ENCODE measurements at regions of chr17 and their contacts with region 1.

Region 1: DNA sequence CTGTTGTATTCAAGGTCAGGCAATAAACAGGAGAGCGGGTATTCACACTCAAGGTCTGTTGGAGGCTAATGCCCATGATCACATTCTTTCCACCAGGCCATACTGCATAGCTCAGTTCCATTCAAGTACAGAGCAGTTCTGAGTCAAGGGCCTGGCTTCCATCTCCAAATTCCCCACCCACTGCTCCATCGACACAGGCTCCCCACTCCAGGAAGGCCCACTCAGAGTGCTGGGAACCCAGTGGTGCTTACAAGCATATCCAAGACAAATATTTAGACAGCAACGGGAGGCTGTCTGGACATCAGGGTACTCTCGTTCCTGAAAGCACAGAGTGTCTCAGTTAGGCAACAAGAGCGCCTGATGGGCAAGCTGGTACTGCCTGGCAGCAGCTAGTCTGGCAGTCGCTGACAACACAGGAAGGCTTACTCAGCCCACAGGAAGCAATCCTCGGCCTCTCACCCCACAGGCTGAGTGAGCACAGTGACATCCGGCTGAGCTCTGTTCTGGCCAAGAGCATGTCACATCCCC is 40.9 kb downstream of the RFFL start:
- DNase-seq: peak; percentile 88
- ATAC-seq: peak; percentile 100
- H3K4me3 Mint-ChIP-seq: peak overlapping the region; percentile 74
- H3K27ac Mint-ChIP-seq: peak overlapping the region; percentile 99
- H3K4me1 Mint-ChIP-seq: peaks cover 48% of the 10 kb centered on the region
- H3K27me3 Mint-ChIP-seq: no peaks in the 10 kb centered on the region
- CTCF ChIP-seq: no peak

Region 2: GRCh38 chr17:35011671-35012210 is 10.9 kb before region 1 on chr17:
- CTCF ChIA-PET with region 1: interaction called, 11 read pairs
- POLR2A ChIA-PET with region 1: interaction called, 15 read pairs
- intact Hi-C with region 1: no loop called
- DNase-seq: no peak
- ATAC-seq: no peak
- H3K4me3 Mint-ChIP-seq: no peak overlapping the region
- H3K27ac Mint-ChIP-seq: peak overlapping the region; percentile 4
- H3K4me1 Mint-ChIP-seq: no peaks in the 10 kb centered on the region
- H3K27me3 Mint-ChIP-seq: no peaks in the 10 kb centered on the region
- CTCF ChIP-seq: no peak

Region 3: DNA sequence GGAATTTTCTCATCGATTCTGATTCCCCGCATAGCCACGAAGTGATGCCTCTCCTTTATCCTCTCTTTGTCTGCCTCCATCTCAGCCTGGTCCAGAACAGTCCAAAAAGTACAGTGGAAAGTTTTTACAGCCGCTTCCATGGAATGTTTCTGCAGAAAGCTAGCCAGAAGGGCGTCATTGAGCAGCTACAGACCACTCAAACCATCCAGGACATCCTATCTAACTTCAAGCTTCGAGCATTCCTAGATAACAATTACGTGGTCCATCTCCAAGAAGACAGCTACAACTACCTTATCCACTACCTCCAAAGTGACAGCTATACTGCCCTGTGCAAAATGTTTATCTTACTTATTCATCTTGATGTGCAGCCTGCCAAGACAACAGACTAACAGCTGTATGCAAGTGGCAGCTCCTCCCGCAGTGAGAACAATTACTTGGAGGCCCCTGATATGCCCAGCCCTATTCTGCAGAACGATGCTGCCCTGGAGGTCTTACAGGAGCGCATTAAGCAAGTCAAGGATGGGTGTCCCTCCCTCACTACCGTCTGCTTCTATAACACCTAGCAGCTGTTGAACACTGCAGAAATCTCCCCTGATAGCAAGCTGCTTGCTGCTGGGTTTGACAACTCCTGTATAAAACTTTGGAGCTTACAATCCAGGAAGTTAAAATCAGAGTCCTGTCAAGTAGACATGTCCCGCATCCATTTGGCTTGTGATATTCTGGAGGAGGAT is 476.0 kb after region 1 on chr17:
- CTCF ChIA-PET with region 1: no interaction called
- POLR2A ChIA-PET with region 1: no interaction called
- intact Hi-C with region 1: no loop called
- DNase-seq: no peak
- ATAC-seq: no peak
- H3K4me3 Mint-ChIP-seq: no peak overlapping the region
- H3K27ac Mint-ChIP-seq: no peak overlapping the region
- H3K4me1 Mint-ChIP-seq: peaks cover 68% of the 10 kb centered on the region
- H3K27me3 Mint-ChIP-seq: no peaks in the 10 kb centered on the region
- CTCF ChIP-seq: no peak